CD4-positive, alpha-beta T cell (primary cell): ENCODE measurements at regions of chr3 and their contacts with region 1.

Region 1: DNA sequence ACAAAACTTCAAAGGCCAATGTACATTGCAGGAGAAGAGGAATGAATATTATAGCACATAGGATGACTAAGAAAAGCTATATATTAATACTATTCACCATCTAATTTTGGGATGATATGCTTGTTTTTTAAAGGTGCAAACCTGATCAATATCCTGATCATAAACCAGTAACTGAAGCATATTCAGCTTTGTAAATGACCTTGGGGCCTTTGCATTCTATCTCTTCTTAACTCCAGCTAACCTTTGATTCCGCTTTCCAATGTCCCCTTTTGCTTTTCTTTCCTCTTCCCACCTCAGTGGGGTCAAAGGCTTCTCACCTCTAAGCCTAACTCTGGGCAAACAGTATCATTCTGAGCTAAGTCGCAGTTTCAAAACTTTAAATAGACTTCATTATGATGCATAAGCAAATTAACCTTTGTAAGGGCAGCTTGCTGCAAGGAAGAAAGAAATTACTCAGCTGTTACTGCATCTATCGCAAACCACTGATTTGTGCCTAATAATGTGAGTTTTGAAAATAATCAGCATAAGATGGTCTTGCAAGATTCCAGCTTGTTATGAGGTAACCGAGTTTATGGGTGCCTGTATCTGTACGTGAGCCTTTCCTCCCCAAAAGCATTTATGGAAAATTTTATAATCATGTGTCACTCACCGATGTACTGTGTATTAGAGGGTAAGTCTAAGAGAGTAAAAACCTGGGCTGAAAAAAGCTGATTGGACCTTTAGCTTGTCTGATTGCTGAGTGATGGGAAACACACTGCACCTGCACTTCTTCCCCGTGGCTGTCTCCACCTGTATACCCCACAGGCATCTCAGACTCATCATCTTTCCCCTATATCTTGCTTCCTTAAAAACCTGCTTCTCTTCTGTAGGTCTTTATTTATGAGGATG is 116.8 kb downstream of the TPRG1 start:
- DNase-seq: no peak
- ATAC-seq: no peak
- H3K4me3 ChIP-seq: no peak overlapping the region
- H3K4me3 Mint-ChIP-seq: no peak overlapping the region
- H3K27ac ChIP-seq: no peak overlapping the region
- H3K27ac Mint-ChIP-seq: no peak overlapping the region
- H3K4me1 ChIP-seq: peaks cover 12% of the 10 kb centered on the region
- H3K4me1 Mint-ChIP-seq: peaks cover 42% of the 10 kb centered on the region
- H3K27me3 ChIP-seq: no peaks in the 10 kb centered on the region
- H3K27me3 Mint-ChIP-seq: no peaks in the 10 kb centered on the region
- CTCF ChIP-seq: no peak

Region 2: GRCh38 chr3:189298469-189299375 is 10.1 kb after region 1 on chr3:
- CTCF ChIA-PET with region 1: interaction called, 3 read pairs
- POLR2A ChIA-PET with region 1: interaction called, 12 read pairs
- intact Hi-C with region 1: no loop called
- DNase-seq: peak in 1 of 14 experiments; percentile 16
- ATAC-seq: no peak
- H3K4me3 ChIP-seq: no peak overlapping the region
- H3K4me3 Mint-ChIP-seq: peak overlapping the region; percentile 12
- H3K27ac ChIP-seq: no peak overlapping the region
- H3K27ac Mint-ChIP-seq: peak overlapping the region; percentile 69
- H3K4me1 ChIP-seq: no peaks in the 10 kb centered on the region
- H3K4me1 Mint-ChIP-seq: peaks cover 56% of the 10 kb centered on the region
- H3K27me3 ChIP-seq: no peaks in the 10 kb centered on the region
- H3K27me3 Mint-ChIP-seq: no peaks in the 10 kb centered on the region
- CTCF ChIP-seq: no peak

Region 3: DNA sequence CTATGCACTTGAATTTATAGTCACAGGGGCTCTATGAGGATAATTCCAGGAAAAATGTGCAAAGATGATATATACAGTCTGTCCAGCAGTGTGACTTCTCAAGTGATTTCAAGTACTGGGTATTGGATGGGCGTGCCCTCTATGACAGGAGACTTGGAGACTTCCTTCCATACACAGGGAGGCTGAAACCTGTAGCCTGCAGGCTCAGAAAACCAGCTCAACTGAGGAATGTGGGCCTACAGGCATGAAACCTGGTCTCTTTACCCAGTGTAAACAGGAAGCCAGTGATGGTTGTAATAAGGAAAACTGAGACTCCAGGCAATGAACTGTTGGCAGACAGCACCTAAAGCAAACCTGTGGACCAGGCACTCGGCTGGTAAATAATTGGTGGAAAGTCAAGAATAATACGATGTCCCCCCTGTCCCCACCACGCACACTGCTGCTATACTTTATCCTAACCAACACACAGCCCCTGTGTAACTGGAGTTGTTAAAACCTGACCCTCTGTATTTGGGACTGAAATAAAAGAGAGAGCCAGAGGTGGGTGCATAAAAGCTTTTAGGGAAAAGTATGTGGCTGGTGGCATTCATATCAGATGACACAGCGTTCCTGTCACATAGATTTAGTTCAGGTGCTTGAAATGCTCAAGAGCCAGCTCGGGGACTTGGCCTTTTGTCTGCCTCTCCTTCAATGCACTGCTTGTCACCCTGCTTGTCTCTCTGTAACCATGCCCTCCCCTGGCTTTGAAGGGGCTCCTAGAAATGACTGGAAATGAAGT is 27.8 kb after region 1 on chr3:
- CTCF ChIA-PET with region 1: no interaction called
- POLR2A ChIA-PET with region 1: interaction called, 3 read pairs
- intact Hi-C with region 1: loop called in 1 of 2 experiments (anchors 2 kb)
- DNase-seq: no peak
- ATAC-seq: no peak
- H3K4me3 ChIP-seq: no peak overlapping the region
- H3K4me3 Mint-ChIP-seq: no peak overlapping the region
- H3K27ac ChIP-seq: no peak overlapping the region
- H3K27ac Mint-ChIP-seq: no peak overlapping the region
- H3K4me1 ChIP-seq: peaks cover 6% of the 10 kb centered on the region
- H3K4me1 Mint-ChIP-seq: peaks cover 37% of the 10 kb centered on the region
- H3K27me3 ChIP-seq: no peaks in the 10 kb centered on the region
- H3K27me3 Mint-ChIP-seq: no peaks in the 10 kb centered on the region
- CTCF ChIP-seq: no peak

Region 4: DNA sequence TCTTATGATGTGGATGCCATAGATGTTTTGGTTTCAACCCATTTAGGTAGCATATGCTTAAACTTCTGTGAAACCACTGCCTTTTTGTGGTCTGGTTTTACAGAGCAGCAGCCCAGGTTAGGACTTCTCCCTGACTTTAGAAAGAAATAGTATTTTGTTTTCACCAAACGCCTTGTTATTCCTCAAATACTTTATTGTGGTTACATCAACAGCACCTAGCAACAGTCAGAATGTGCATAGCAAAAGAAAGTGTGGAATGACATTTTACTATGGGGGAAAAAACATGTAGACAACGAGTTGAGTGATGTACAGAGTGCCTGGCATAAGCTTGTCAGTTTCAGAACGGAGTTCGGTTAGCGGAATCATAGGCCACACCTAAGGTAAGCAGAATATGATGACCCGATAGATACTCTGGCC is 42.4 kb after region 1 on chr3:
- CTCF ChIA-PET with region 1: interaction called, 5 read pairs
- POLR2A ChIA-PET with region 1: interaction called, 11 read pairs
- intact Hi-C with region 1: no loop called
- DNase-seq: peak in 3 of 14 experiments; percentile 25 to 34 (median 34)
- ATAC-seq: peak; percentile 40
- H3K4me3 ChIP-seq: no peak overlapping the region
- H3K4me3 Mint-ChIP-seq: peak overlapping the region; percentile 26
- H3K27ac ChIP-seq: no peak overlapping the region
- H3K27ac Mint-ChIP-seq: peak overlapping the region; percentile 45
- H3K4me1 ChIP-seq: peaks cover 32% of the 10 kb centered on the region
- H3K4me1 Mint-ChIP-seq: peaks cover 69% of the 10 kb centered on the region
- H3K27me3 ChIP-seq: no peaks in the 10 kb centered on the region
- H3K27me3 Mint-ChIP-seq: no peaks in the 10 kb centered on the region
- CTCF ChIP-seq: no peak

Region 5: DNA sequence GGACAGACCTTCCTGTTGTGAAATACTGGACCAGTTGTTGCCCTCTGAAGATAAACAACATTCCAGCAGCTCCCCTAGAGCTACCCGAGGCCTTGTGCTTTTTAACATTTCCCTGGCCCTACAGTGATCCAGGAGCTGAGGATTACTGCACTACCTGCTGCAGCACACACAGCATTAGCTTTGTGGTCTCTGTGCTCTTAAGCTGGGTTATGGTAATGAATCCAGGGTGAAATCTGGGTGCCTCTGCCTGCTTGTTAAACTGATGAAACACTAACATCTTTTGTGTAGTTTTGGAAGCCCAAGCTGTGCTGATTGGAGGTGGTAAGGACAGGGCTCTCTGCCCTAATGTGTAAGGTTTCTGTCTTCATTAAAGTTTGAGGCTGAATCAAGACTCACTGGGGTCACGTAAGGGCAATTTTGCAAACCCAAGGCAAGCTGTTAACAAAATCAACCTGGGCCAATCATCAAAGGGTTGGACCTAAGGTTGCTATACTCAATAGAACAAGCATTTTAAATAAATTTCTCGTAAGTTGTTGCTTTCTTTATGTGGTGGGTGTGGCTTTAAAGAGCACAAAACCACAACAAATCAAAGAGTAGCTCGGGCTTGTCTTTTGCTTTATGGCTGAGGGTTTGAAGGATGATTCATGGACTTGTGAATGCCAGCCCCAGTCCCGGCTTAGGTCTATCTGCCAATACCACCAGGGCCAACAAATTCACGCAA is 67.0 kb after region 1 on chr3:
- CTCF ChIA-PET with region 1: no interaction called
- POLR2A ChIA-PET with region 1: interaction called, 5 read pairs
- intact Hi-C with region 1: loop called in 1 of 2 experiments (anchors 5 kb)
- DNase-seq: peak; percentile 14 to 80 (median 38)
- ATAC-seq: peak; percentile 83
- H3K4me3 ChIP-seq: peak overlapping the region; percentile 8
- H3K4me3 Mint-ChIP-seq: peak overlapping the region; percentile 52
- H3K27ac ChIP-seq: peak overlapping the region; percentile 13 to 48
- H3K27ac Mint-ChIP-seq: peak overlapping the region; percentile 90
- H3K4me1 ChIP-seq: peaks cover 19% of the 10 kb centered on the region
- H3K4me1 Mint-ChIP-seq: peaks cover 48% of the 10 kb centered on the region
- H3K27me3 ChIP-seq: no peaks in the 10 kb centered on the region
- H3K27me3 Mint-ChIP-seq: no peaks in the 10 kb centered on the region
- CTCF ChIP-seq: no peak